ENCODE measurements at regions of chrX and their contacts with region 1.

Region 1: DNA sequence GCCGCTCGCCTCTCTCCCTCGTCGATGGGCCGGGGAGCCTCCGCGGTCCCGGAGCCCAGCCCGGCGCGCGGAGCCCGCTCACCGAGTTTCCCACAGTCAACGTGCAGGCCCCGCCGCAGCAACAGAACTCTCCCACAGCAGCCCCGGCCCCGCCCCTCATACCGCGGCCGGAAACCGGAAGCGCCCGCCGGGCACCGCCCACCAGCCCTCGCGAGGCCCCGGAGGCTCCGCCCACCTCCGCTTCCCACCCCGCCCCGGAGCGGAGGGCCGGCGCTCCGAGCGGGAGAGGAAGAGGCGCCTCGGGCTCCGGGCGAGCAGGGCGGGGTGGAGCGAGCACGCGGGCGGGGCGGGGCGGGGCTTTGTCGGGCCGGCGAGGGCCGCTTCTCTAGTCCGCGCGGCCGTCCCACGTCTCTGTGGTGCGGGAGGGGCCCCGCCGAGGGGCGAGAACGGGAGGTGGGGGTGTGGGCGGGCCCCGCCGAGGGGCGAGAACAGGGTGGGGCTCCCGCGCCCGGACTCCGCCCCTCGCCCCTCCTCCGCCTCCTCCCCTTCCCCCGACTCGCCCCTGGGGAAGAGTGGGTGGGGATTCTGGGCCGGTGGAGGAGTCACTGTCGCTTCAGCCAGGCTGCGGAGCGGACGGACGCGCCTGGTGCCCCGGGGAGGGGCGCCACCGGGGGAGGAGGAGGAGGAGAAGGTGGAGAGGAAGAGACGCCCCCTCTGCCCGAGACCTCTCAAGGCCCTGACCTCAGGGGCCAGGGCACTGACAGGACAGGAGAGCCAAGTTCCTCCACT is at the starts of genes ABCD1 and BCAP31:
- DNase-seq: peak; percentile 51 to 92
- H3K4me3 ChIP-seq: peak within 1 kb of the TSS; percentile 62 to 69
- H3K27ac ChIP-seq: peak within 1 kb of the TSS; percentile 88 to 89
- H3K4me1 ChIP-seq: peaks cover 8 to 26% of the 10 kb centered on the region in 2 donors
- H3K27me3 ChIP-seq: no peaks in the 10 kb centered on the region
- CTCF ChIP-seq: no peak
- total RNA-seq, gene ABCD1: 14.7 TPM
- total RNA-seq, gene BCAP31: 63.0 TPM

Region 2: GRCh38 chrX:153763989-153764755 is 39.7 kb after region 1 on chrX and contains the start of gene PLXNB3:
- intact Hi-C with region 1: no loop called
- DNase-seq: peak; percentile 32 to 90
- H3K4me3 ChIP-seq: peak within 1 kb of the TSS; percentile 31 to 56
- H3K27ac ChIP-seq: peak within 1 kb of the TSS; percentile 58 to 59
- H3K4me1 ChIP-seq: peaks cover 0 to 8% of the 10 kb centered on the region in 2 donors
- H3K27me3 ChIP-seq: no peaks in the 10 kb centered on the region
- CTCF ChIP-seq: peak; percentile 81 to 87 (median 82)
- total RNA-seq, gene PLXNB3: 99.1 TPM

Region 3: DNA sequence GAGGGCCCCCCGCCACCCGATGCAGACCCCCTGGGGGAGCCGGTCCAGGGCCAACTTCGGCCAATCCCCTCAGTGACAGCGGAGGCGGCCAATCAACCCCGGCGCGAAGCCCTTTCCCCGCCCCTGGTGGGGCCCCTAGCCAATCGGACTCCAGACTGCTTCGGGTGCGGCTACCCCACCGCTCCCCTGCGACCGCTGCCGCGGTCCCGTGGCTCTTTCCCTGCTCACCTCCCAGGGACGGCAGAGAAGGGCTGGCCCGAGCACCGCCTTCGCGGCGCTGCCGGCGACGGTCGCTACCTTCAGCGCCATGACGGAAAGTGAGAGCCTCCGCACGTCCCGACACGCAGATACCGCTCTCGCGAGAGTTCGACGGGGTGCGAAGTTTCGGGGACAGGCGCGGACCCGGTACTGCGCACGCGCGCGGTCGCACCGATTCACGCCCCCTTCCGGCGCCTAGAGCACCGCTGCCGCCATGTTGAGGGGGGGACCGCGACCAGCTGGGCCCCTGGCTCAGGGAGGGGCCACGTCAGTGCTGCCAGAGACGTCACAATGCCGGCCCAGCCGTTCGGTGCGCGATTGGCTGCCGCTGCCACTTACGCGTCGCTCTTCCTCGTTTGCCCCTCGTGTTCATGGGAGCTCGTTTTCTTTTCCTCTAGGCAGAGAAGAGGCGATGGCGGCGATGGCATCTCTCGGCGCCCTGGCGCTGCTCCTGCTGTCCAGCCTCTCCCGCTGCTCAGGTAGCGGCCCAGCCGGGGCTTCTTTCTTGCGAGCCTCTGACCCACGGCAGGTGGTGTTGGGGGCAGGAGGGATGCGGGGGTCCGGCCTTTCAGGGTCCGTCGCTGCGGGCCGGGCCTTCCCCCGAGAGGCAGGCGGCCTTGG is 69.8 kb after region 1 on chrX and contains the starts of genes IDH3G and SSR4:
- intact Hi-C with region 1: loop called (anchors 1 kb)
- DNase-seq: peak; percentile 48 to 95
- H3K4me3 ChIP-seq: peak within 1 kb of the TSS; percentile 71 to 76
- H3K27ac ChIP-seq: peak within 1 kb of the TSS; percentile 93 to 96
- H3K4me1 ChIP-seq: peaks cover 0 to 6% of the 10 kb centered on the region in 2 donors
- H3K27me3 ChIP-seq: no peaks in the 10 kb centered on the region
- CTCF ChIP-seq: peak in 1 of 3 experiments; percentile 13
- total RNA-seq, gene IDH3G: 351 TPM
- total RNA-seq, gene SSR4: 331 TPM

Measured in ascending aorta (tissue), 2 donors.